Caco-2 (cell line): ENCODE measurements at regions of chr19 and their contacts with region 1.

Region 1: DNA sequence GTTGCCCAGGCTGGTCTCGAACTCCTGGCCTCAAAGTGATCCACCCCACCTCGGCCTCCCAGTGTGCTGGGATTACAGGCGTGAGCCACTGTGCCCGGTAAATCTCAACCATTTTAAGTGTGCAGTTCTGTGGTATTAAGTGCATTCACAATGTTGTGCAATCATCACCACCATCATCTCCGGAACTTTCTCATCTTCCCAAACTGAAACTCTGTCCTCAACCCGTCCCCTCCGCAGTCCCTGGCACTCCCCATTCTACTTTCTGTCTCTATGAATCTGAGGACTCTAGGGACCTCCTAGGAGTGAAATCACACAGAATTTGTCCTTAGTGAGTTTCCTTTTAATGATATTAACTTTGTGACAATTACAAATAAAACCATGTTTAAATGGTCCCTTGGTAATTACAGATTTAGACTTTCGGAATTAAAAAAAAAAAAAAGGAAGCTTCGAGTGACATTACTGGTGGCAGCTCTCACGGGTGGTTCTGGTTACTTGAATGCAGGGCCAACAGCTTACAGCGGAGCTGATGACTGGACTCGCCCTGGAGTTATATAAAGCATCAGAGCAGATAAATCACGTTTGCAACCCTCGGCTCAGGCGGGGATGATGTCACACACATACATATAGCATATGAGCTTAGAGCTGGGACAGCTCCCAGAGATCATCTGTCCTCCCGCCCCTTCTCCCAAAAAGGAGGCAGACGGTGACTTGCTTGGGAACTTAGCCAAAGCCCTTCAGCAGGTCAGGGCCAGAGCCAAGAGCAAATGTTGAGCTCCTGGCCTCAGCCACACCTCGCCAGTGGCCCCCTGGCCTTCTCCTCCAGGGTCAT is 89.8 kb downstream of the ZNF557 start:
- DNase-seq: no peak
- H3K4me3 ChIP-seq: no peak overlapping the region
- H3K4me3 Mint-ChIP-seq: no peak overlapping the region
- H3K27ac Mint-ChIP-seq: no peak overlapping the region
- H3K4me1 ChIP-seq: no peaks in the 10 kb centered on the region
- H3K4me1 Mint-ChIP-seq: no peaks in the 10 kb centered on the region
- H3K27me3 ChIP-seq: no peaks in the 10 kb centered on the region
- H3K27me3 Mint-ChIP-seq: no peaks in the 10 kb centered on the region
- CTCF ChIP-seq: no peak

Region 2: DNA sequence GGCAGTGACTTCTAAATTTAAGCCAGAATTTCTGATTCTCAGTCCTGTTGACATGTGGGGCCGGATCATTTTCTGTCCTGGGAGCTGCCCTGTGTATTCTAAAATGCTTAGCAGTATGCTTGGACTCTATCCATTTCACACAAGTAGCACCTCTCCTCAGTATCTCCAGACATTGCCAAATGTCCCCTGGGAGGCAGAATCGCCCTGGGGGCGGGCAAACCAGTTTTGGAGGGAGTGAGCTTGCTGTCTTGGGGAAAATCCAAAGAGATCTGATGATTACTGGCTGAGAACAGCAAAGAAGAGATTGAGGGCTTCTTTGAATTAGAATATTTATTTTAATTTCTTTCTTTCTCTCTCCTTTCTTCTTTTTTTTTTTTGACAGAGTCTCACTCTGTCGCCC is 370.4 kb before region 1 on chr19:
- CTCF ChIA-PET with region 1: no interaction called
- POLR2A ChIA-PET with region 1: no interaction called
- intact Hi-C with region 1: no loop called
- DNase-seq: no peak
- H3K4me3 ChIP-seq: no peak overlapping the region
- H3K4me3 Mint-ChIP-seq: no peak overlapping the region
- H3K27ac Mint-ChIP-seq: no peak overlapping the region
- H3K4me1 ChIP-seq: no peaks in the 10 kb centered on the region
- H3K4me1 Mint-ChIP-seq: no peaks in the 10 kb centered on the region
- H3K27me3 ChIP-seq: no peaks in the 10 kb centered on the region
- H3K27me3 Mint-ChIP-seq: no peaks in the 10 kb centered on the region
- CTCF ChIP-seq: no peak

Region 3: GRCh38 chr19:7137120-7137519 is 22.2 kb before region 1 on chr19:
- CTCF ChIA-PET with region 1: no interaction called
- POLR2A ChIA-PET with region 1: interaction called, 11 read pairs
- intact Hi-C with region 1: no loop called
- DNase-seq: no peak
- H3K4me3 ChIP-seq: no peak overlapping the region
- H3K4me3 Mint-ChIP-seq: no peak overlapping the region
- H3K27ac Mint-ChIP-seq: no peak overlapping the region
- H3K4me1 ChIP-seq: peaks cover 8% of the 10 kb centered on the region
- H3K4me1 Mint-ChIP-seq: no peaks in the 10 kb centered on the region
- H3K27me3 ChIP-seq: no peaks in the 10 kb centered on the region
- H3K27me3 Mint-ChIP-seq: no peaks in the 10 kb centered on the region
- CTCF ChIP-seq: no peak

Region 4: GRCh38 chr19:7211204-7211951 is 52.1 kb after region 1 on chr19:
- CTCF ChIA-PET with region 1: no interaction called
- POLR2A ChIA-PET with region 1: no interaction called
- intact Hi-C with region 1: no loop called
- DNase-seq: no peak
- H3K4me3 ChIP-seq: no peak overlapping the region
- H3K4me3 Mint-ChIP-seq: no peak overlapping the region
- H3K27ac Mint-ChIP-seq: no peak overlapping the region
- H3K4me1 ChIP-seq: peaks cover 19% of the 10 kb centered on the region
- H3K4me1 Mint-ChIP-seq: peaks cover 19% of the 10 kb centered on the region
- H3K27me3 ChIP-seq: no peaks in the 10 kb centered on the region
- H3K27me3 Mint-ChIP-seq: no peaks in the 10 kb centered on the region
- CTCF ChIP-seq: no peak

Region 5: DNA sequence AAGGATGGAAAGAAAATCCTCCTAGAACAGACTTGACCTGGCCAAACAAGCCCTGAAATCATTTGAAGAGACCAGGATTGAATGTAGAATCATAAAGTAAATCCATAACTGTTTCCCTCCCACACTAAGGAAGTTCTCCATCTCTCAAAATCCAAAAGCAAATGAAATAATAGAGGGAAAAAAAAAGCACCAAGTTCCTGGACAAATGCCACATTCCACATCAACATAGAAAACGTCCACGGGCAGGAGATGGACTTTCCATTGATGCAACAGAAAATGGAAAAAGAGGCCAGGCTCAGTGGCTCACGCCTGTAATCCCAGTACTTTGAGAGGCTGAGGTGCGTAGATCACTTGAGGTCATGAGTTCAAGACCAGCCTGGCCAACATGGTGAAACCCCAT is 78.7 kb after region 1 on chr19:
- CTCF ChIA-PET with region 1: interaction called, 12 read pairs
- POLR2A ChIA-PET with region 1: no interaction called
- intact Hi-C with region 1: no loop called
- DNase-seq: no peak
- H3K4me3 ChIP-seq: no peak overlapping the region
- H3K4me3 Mint-ChIP-seq: no peak overlapping the region
- H3K27ac Mint-ChIP-seq: no peak overlapping the region
- H3K4me1 ChIP-seq: no peaks in the 10 kb centered on the region
- H3K4me1 Mint-ChIP-seq: no peaks in the 10 kb centered on the region
- H3K27me3 ChIP-seq: no peaks in the 10 kb centered on the region
- H3K27me3 Mint-ChIP-seq: no peaks in the 10 kb centered on the region
- CTCF ChIP-seq: no peak